Right lobe of liver (tissue), 6 donors: ENCODE measurements at regions of chr14 and their contacts with region 1.

Region 1: DNA sequence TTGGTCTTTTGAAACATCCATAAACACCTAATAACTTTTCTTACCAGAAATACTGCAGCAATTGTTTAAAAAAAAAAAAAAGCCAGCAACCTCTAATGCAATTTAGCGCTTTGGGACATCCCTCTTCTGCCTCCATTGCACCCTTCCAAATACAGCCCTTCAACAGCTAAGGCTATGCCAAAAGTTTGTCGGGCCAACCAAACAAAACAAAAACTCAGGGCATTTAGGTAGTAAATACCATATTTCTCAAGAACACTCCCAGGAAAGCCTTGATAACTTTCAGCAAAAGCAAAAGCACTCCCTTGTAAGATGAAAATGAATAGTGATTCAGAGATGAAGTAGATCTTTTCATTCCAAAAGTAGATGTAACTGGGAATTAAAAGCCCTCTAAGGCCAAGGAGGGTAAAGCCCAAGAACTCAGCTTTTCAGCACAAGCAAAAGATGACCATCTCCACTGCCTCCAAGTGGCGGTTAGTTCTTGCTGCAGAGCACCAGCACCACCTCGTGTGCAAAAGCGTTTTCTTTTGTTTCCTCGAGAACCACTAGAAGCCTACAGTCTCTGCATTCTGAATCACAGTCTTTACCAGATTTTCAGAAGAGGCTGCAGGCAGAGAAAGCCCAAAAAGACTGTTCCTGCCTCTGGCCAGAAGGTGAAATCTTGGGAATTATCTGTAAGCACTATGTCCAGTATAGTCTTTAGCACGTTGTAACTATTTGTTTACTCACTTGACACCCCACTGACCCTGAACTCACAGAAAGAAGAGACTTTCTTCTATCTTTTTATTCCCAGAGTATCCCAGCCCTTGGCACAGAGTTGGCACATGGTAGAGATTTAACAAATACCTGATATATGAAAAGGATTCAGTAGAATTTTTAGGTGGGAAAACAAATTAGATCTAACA is 53.1 kb downstream of the SIX6 start:
- DNase-seq: no peak
- ATAC-seq: peak; percentile 63 to 80 (median 76)
- H3K4me3 ChIP-seq: no peak overlapping the region
- H3K27ac ChIP-seq: no peak overlapping the region
- H3K4me1 ChIP-seq: no peaks in the 10 kb centered on the region
- H3K27me3 ChIP-seq: no peaks in the 10 kb centered on the region
- CTCF ChIP-seq: peak; percentile 38 to 58 (median 46)
- POLR2A ChIP-seq: no peak

Region 2: GRCh38 chr14:60363275-60363674 is 198.8 kb before region 1 on chr14:
- intact Hi-C with region 1: loop called in 1 of 2 experiments (anchors 10 kb)
- DNase-seq: no peak
- ATAC-seq: no peak
- H3K4me3 ChIP-seq: no peak overlapping the region
- H3K27ac ChIP-seq: no peak overlapping the region
- H3K4me1 ChIP-seq: no peaks in the 10 kb centered on the region
- H3K27me3 ChIP-seq: no peaks in the 10 kb centered on the region
- CTCF ChIP-seq: no peak
- POLR2A ChIP-seq: no peak

Region 3: DNA sequence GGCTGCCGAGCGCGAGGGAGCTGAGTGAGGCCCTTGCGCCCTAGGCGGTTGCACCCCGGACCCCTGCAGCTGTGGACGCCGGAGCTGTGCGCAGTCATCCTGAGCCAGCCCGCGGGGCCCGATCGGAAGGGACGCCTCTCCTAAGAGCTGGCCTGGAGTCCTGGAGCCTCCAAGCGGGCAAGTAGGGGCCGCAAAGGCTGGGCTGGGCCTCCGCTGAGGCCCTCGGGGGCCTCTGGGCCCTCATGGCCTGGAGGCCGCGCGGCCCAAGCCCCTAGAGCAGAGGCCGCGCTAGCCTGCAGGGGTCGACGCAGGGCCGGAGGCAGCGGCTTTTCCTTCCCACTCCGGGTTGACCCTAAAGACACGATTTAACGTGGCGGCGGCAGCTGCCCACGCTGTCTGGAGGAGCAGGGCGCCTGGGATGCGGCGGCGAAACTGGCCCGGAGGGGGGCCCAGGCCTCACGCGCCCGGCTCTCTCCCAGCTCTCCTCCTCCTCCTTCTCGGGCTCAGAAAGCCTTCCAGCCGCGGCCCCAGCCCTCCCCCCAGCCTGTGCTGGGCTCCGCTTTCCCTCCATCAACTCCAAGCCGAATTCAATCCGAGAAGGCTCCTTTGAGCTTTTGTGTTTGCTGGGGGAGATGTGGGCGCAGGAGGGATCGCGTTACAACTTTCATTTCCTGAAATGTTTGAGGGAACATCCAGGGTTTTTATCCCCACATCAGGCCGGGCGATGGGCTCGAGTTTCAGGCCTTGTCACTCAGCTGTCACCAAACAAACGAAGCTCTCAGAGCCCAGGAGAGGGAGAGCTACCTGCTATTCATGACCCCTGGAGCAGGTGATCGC is 75.6 kb after region 1 on chr14:
- intact Hi-C with region 1: no loop called
- DNase-seq: no peak
- ATAC-seq: peak; percentile 20 to 42 (median 26)
- H3K4me3 ChIP-seq: peak overlapping the region in 1 of 3 donors; percentile 4
- H3K27ac ChIP-seq: no peak overlapping the region
- H3K4me1 ChIP-seq: peaks cover 0 to 15% (median 0%) of the 10 kb centered on the region in 4 donors
- H3K27me3 ChIP-seq: peaks cover 8 to 42% of the 10 kb centered on the region in 2 donors
- CTCF ChIP-seq: no peak
- POLR2A ChIP-seq: no peak

Region 4: GRCh38 chr14:60845523-60845922 is 283.4 kb after region 1 on chr14:
- intact Hi-C with region 1: no loop called
- DNase-seq: no peak
- ATAC-seq: no peak
- H3K4me3 ChIP-seq: no peak overlapping the region
- H3K27ac ChIP-seq: no peak overlapping the region
- H3K4me1 ChIP-seq: no peaks in the 10 kb centered on the region
- H3K27me3 ChIP-seq: no peaks in the 10 kb centered on the region
- CTCF ChIP-seq: no peak
- POLR2A ChIP-seq: no peak